ENCODE measurements at regions of chr2 and their contacts with region 1.

Region 1: DNA sequence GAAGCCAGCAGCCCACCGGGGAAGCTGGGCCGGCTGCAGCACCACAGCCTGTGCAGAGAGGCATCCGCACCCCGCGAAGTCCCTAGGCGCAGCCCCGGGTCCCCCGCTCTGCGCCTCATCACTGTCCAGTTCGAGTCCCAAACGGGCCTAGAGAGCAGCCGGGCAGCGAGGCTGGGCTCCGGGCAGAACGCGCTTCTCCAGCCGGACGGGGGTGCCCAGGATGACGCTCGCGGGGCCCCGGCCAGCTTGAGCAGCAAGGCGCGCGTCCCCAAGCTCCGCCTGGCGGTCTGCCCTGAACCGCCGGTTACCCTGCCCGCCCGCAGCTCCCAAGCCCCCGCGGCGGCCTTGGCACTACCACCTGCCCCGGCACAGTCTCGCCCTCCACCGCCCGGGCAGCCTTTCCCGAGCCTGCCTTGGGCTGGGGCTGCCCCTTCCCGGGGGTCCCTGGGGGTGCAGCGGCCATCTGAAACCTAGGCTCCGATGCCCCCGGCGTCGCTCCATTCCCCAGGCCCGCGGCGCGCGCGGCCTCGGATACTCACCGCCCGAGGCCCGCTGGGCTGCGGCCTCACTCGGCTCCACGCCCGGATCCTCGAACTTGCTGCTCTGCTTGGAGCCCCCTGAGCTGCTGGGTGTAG is 591 bp downstream of the SLC16A14 start:
- DNase-seq: peak; percentile 23 to 69
- H3K4me3 ChIP-seq: peak overlapping the region; percentile 63 to 65
- H3K27ac ChIP-seq: peak overlapping the region; percentile 46 to 64
- H3K4me1 ChIP-seq: peaks cover 0 to 16% (median 8%) of the 10 kb centered on the region in 4 donors
- H3K27me3 ChIP-seq: no peaks in the 10 kb centered on the region
- CTCF ChIP-seq: peak in 1 of 2 experiments; percentile 10

Region 2: GRCh38 chr2:230155359-230155758 is 87.2 kb after region 1 on chr2:
- intact Hi-C with region 1: loop called (anchors 5 kb)
- DNase-seq: no peak
- H3K4me3 ChIP-seq: no peak overlapping the region
- H3K27ac ChIP-seq: no peak overlapping the region
- H3K4me1 ChIP-seq: no peaks in the 10 kb centered on the region
- H3K27me3 ChIP-seq: no peaks in the 10 kb centered on the region
- CTCF ChIP-seq: no peak

Measured in tibial artery (tissue), 4 donors.